ENCODE measurements at regions of chr9 and their contacts with region 1.

Region 1: DNA sequence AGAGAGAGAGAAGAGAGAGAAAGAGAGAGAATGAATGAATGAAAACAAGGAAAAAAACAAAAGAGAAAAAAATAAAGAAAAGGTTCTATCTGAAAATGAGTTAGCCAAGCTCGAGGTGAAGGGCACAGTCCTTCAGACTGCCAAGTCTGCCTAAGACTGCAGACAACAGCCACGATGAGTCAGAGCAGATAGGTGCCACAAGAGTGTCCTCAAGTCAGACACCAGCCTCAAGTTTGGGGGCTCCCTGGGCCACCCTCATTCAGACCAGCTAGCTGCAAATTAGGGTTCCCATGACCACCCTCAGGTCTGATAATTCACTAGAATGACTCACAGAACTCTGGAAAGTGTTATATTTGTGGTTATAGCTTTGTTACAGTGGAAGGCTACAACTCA is 13.9 kb upstream of the HABP4 start:
- DNase-seq: no peak
- H3K4me3 Mint-ChIP-seq: no peak overlapping the region
- H3K27ac Mint-ChIP-seq: no peak overlapping the region
- H3K4me1 Mint-ChIP-seq: no peaks in the 10 kb centered on the region
- H3K27me3 Mint-ChIP-seq: no peaks in the 10 kb centered on the region

Region 2: GRCh38 chr9:96449845-96450612 is 14.0 kb after region 1 on chr9 and contains the start of gene HABP4:
- CTCF ChIA-PET with region 1: interaction called, 10 read pairs
- POLR2A ChIA-PET with region 1: no interaction called
- DNase-seq: peak; percentile 95
- H3K4me3 Mint-ChIP-seq: peak within 1 kb of the TSS; percentile 83
- H3K27ac Mint-ChIP-seq: peak within 1 kb of the TSS; percentile 87
- H3K4me1 Mint-ChIP-seq: peaks cover 22% of the 10 kb centered on the region
- H3K27me3 Mint-ChIP-seq: peaks cover 23% of the 10 kb centered on the region
- total RNA-seq, gene HABP4: 5.0 to 6.1 TPM

Measured in activated CD4-positive, alpha-beta T cell treated with anti-CD3 and anti-CD28 coated beads, Interleukin-2, amount 10 ng/mL, durations not matched to agents 7 days and 5 days (primary cell).